HepG2 (cell line): ENCODE measurements at regions of chr1 and their contacts with region 1.

Region 1: GRCh38 chr1:39132505-39133339 is 71.8 kb upstream of the MACF1 start:
- DNase-seq: peak; percentile 85
- ATAC-seq: peak; percentile 98
- H3K4me3 ChIP-seq: peak overlapping the region in 1 of 3 experiments; percentile 24; a peak in 1 of 6 replicates
- H3K27ac ChIP-seq: peak overlapping the region; percentile 52
- H3K4me1 ChIP-seq: peaks cover 42% of the 10 kb centered on the region
- H3K27me3 ChIP-seq: no peaks in the 10 kb centered on the region
- CTCF ChIP-seq: peak; percentile 86
- EP300 ChIP-seq: no peak
- POLR2A ChIP-seq: no peak
- RAD21 ChIP-seq: peak; percentile 67

Region 2: DNA sequence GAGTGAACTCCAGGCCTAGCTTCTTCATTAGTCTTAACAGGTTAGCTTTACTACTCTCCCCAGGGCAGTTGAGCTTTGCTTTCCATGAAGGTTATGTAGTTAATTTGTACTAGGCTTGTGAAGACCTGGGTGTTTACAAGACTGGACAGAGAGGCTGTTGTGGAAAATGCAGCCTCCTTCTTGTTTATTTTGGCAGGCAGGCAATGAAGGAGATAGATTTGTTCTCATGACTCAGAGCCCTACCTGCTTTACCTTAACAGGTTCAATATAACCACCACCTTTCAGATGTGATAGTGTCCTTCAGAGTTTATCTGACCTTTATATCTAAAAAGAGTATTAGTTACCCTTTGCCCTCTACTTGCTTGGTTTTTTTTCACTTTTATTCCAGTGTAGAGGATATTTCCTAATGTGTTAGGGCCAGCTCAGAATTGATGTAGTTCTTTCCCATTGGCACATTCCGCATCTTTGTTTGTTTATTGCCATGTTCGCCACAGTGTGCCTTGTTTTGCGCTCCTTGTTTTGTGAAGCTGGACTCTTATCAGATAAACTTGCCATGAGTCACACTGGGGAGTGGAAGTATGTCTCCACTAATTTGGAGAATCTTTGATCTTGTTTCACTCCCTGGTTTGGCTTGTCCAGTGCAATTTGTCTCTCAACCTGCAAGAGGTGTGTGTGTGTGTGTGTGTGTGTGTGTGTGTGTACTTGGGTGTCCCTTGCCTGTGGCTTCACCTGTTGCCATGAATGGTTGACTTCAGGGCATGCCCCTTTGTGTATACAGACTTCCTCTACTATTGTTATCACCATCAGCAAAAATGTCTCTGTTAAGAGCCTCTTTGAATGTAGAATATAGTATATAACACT is 15.6 kb before region 1 on chr1:
- CTCF ChIA-PET with region 1: no interaction called
- POLR2A ChIA-PET with region 1: interaction called, 8 read pairs
- in situ Hi-C with region 1: no loop called
- intact Hi-C with region 1: loop called (anchors 2 kb)
- DNase-seq: peak; percentile 84
- ATAC-seq: peak; percentile 75
- H3K4me3 ChIP-seq: no peak overlapping the region
- H3K27ac ChIP-seq: peak overlapping the region; percentile 33
- H3K4me1 ChIP-seq: peaks cover 46% of the 10 kb centered on the region
- H3K27me3 ChIP-seq: no peaks in the 10 kb centered on the region
- CTCF ChIP-seq: no peak
- EP300 ChIP-seq: peak in 1 of 2 experiments; percentile 45; a peak in 1 of 4 replicates
- POLR2A ChIP-seq: no peak
- RAD21 ChIP-seq: no peak

Region 3: GRCh38 chr1:39170731-39171667 is 38.3 kb after region 1 on chr1:
- CTCF ChIA-PET with region 1: no interaction called
- POLR2A ChIA-PET with region 1: interaction called, 10 read pairs
- in situ Hi-C with region 1: no loop called
- intact Hi-C with region 1: no loop called
- DNase-seq: no peak
- ATAC-seq: peak; percentile 34; the same call in 1 of the 3 replicates
- H3K4me3 ChIP-seq: no peak overlapping the region
- H3K27ac ChIP-seq: no peak overlapping the region
- H3K4me1 ChIP-seq: peaks cover 79% of the 10 kb centered on the region
- H3K27me3 ChIP-seq: no peaks in the 10 kb centered on the region
- CTCF ChIP-seq: no peak
- EP300 ChIP-seq: no peak
- POLR2A ChIP-seq: no peak
- RAD21 ChIP-seq: no peak